Transverse colon (tissue), 4 donors: ENCODE measurements at regions of chr3 and their contacts with region 1.

Region 1: DNA sequence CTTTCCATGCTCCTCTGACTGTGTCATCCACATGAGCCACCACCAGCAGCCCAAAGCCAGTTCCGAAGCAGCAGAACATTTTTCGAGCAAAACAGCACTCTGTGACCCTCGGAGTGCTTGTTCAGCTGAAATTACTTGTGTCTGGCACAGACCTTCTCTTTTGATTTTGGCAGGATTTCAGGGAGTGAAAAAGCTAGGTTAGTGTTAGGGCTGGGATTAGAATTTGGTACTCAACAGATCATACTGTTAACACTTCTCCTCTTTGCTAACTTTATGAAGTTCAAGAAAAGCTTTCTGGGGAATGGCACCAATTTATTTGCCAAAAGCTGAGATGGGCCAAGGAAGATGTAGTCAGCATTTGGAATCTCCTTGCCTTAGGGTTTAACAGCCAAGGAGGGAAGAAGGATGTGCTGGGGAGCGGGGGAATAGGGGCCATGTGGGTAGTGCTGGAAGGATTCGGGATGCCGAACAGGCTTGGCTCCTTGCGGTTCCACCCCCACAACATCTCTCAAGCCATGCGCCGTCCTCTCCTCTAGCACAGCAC is 55.1 kb upstream of the TRA2B start:
- DNase-seq: no peak
- H3K4me3 ChIP-seq: no peak overlapping the region
- H3K27ac ChIP-seq: no peak overlapping the region
- H3K4me1 ChIP-seq: no peaks in the 10 kb centered on the region
- H3K27me3 ChIP-seq: no peaks in the 10 kb centered on the region
- CTCF ChIP-seq: no peak
- EP300 ChIP-seq: no peak
- POLR2A ChIP-seq: no peak

Region 2: GRCh38 chr3:185912929-185913901 is 79.7 kb before region 1 on chr3:
- in situ Hi-C with region 1: loop called in 1 of 4 experiments (anchors 5 kb)
- intact Hi-C with region 1: no loop called
- DNase-seq: no peak
- H3K4me3 ChIP-seq: no peak overlapping the region
- H3K27ac ChIP-seq: no peak overlapping the region
- H3K4me1 ChIP-seq: no peaks in the 10 kb centered on the region
- H3K27me3 ChIP-seq: no peaks in the 10 kb centered on the region
- CTCF ChIP-seq: no peak
- EP300 ChIP-seq: no peak
- POLR2A ChIP-seq: no peak

Region 3: GRCh38 chr3:185965496-185965895 is 27.4 kb before region 1 on chr3:
- in situ Hi-C with region 1: no loop called
- intact Hi-C with region 1: loop called (anchors 1 kb)
- DNase-seq: no peak
- H3K4me3 ChIP-seq: no peak overlapping the region
- H3K27ac ChIP-seq: no peak overlapping the region
- H3K4me1 ChIP-seq: peaks cover 0 to 8% (median 0%) of the 10 kb centered on the region in 4 donors
- H3K27me3 ChIP-seq: no peaks in the 10 kb centered on the region
- CTCF ChIP-seq: no peak
- EP300 ChIP-seq: no peak
- POLR2A ChIP-seq: no peak